AG04450 (cell line): ENCODE measurements at regions of chr2 and their contacts with region 1.

Region 1: DNA sequence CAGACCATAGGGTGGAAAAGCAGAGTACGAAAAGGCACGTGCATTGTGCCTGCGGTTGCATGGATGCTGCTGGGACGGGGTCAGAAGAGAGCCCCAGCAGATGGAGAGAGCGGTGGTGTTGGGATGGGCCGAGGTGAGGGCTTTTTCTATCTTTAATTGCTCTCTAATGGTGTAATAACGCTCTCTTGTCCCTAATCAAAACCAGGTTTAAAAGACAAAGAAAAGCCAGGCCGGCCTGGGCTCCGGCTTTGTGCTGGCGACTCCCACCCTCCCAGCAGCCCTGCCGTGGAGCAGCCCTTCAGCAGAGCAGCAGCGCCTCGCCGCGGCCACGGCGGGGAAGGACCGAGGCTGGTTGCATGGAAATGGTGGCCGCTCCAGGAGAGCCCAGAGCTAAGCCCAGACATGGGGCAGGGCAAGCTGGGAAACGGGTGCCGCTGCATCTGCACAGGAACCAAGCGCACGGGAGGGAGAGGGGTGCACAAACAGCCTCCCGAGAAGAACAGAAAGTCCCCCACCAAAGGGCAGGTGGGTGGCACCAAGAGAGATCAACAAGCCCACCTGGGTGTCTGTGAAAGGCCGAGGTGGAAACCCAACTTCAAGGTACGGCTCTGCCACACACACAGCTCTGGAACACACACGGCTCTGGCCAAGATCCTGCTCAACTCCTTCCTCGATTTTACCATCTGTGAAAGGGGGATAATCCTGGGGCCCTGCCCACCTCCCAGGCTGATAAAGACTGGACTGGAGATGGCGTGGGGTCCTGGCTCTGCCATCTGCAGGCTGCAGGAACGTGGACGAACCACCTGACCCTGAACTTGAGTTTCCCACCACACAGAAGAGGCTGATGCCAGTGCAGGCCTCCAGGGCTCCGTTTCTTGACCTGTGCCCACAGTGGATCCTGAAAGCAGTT is 15.0 kb downstream of the HS1BP3 start:
- DNase-seq: peak; percentile 53
- H3K4me3 ChIP-seq: no peak overlapping the region
- H3K27ac ChIP-seq: no peak overlapping the region
- H3K27me3 ChIP-seq: no peaks in the 10 kb centered on the region
- CTCF ChIP-seq: peak; percentile 96

Region 2: DNA sequence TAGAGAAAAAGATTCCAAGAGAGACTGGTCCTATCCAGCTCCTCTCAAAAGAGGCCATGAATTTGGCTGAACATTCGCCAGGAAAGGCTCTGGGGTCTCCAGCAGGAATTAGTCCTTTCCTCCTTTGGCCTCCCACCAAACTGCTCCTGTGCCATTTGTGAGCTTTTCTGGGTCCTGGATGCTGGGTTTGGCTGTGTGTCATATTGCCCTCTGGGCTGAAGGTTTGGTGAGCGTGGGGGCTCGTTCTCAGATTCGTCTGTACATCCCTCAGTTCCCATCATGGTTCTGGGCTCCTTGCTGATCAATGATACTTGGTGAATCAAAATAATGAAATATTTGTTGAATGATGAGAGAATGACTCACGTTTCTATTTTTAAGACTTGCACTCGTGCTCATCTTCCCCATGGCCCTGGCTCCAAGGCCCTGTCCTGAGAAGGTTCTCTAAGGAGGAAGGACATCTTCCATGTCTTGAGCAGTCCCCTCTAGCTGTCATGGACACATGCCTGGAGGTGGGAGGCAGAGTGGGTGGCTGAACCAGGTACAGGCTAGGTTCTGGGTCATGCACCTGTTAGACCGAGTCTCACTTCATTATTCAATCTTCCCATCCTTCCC is 236.9 kb before region 1 on chr2:
- CTCF ChIA-PET with region 1: interaction called, 24 read pairs
- POLR2A ChIA-PET with region 1: interaction called, 3 read pairs
- DNase-seq: no peak
- H3K4me3 ChIP-seq: no peak overlapping the region
- H3K27ac ChIP-seq: no peak overlapping the region
- H3K27me3 ChIP-seq: peaks cover 19% of the 10 kb centered on the region
- CTCF ChIP-seq: no peak

Region 3: DNA sequence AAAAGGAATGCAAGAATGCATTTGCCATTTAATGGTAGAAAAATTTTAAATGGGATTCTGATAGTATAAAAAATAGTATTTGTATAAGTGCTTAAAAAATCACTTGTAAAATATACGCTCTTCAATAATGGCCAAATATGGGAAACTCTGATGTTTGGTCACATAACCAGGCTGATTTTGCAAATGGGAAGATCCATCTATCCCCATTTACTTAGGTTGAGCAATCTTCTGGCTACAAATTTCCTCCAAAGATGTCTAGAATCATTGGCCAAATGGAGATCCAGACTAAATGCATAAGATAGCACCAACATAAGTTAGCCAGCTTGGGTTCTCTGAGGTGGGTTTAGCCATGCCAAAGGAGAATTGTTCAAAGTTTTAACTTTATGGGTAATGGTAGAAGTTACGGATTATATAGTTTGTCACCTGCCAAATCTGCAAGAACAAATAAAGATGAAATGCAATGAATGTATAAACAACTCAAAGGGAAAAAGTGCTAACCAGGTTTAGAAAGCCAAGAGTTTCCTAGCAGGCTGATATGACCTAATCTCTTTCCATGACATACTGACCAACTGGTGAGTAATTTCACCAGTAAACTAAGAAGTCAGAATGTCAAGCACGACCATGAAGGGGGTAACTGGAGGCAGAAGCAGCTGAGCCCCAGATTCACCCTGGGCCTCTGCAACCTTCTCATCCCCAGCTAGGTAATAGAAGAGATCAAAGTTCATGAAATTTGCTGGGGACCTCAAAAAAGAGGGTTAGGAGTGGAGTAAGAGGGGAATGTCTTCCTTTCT is 179.1 kb before region 1 on chr2:
- CTCF ChIA-PET with region 1: interaction called, 19 read pairs
- POLR2A ChIA-PET with region 1: no interaction called
- DNase-seq: no peak
- H3K4me3 ChIP-seq: no peak overlapping the region
- H3K27ac ChIP-seq: no peak overlapping the region
- H3K27me3 ChIP-seq: no peaks in the 10 kb centered on the region
- CTCF ChIP-seq: no peak

Region 4: GRCh38 chr2:20707601-20708000 is 71.7 kb after region 1 on chr2:
- CTCF ChIA-PET with region 1: no interaction called
- POLR2A ChIA-PET with region 1: no interaction called
- DNase-seq: no peak
- H3K4me3 ChIP-seq: no peak overlapping the region
- H3K27ac ChIP-seq: no peak overlapping the region
- H3K27me3 ChIP-seq: no peaks in the 10 kb centered on the region
- CTCF ChIP-seq: no peak